ENCODE measurements at regions of chr9 and their contacts with region 1.

Region 1: GRCh38 chr9:77960356-77961153 is 71.1 kb downstream of the GNAQ start:
- DNase-seq: peak; percentile 37 to 44
- H3K4me3 ChIP-seq: no peak overlapping the region
- H3K4me1 ChIP-seq: peaks cover 12% of the 10 kb centered on the region
- H3K27me3 ChIP-seq: no peaks in the 10 kb centered on the region

Region 2: DNA sequence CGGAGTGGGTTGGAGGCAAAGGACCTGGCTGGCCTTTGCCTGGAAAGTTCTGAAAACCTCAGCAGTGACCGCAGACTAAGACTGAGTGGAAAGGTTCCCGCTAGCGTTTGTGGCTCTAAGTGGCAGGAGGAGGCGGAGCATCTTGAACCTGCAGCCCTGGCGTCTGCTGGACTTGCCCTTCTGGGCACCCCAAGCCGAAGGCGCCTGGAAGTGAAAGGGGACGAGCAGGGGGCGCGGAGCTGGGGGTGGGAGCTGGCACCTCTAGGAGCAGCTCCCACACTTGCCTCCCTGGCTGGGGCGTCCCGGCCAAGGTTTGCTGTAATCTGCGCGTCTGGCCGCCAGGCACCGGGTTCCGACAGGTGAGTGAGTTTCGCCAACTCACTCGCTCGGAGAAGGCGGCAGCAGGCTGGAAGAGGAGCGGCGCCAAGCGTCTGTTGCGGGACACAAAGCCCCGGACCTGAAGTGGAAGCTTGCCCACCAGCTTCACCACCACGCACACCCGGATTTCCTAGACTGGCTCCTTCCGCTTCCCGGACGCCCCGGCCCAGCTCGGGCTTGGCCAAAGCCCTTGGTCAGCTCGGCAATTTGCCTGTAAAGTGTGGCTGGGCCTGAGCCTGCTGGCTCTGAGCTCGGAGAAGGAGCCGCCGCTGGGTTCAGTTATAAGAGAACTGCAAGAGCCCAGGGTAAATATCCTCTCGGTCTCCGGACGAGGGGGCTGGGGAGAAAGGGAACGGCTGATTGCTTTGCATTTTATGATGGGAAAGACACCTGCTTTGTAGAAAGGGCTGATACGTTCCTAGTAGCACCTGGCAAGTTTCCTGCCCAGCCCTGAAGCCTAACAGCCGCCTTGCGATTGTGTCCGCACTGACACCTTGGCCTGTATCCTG is 312.1 kb before region 1 on chr9 and contains the start of gene GNA14:
- in situ Hi-C with region 1: no loop called
- DNase-seq: no peak
- H3K4me3 ChIP-seq: no peak within 1 kb of the TSS
- H3K4me1 ChIP-seq: no peaks in the 10 kb centered on the region
- H3K27me3 ChIP-seq: no peaks in the 10 kb centered on the region

Region 3: GRCh38 chr9:77899679-77900354 is 60.7 kb before region 1 on chr9:
- in situ Hi-C with region 1: loop called (anchors 10 kb)
- DNase-seq: no peak
- H3K4me3 ChIP-seq: no peak overlapping the region
- H3K4me1 ChIP-seq: peaks cover 18% of the 10 kb centered on the region
- H3K27me3 ChIP-seq: no peaks in the 10 kb centered on the region

Region 4: DNA sequence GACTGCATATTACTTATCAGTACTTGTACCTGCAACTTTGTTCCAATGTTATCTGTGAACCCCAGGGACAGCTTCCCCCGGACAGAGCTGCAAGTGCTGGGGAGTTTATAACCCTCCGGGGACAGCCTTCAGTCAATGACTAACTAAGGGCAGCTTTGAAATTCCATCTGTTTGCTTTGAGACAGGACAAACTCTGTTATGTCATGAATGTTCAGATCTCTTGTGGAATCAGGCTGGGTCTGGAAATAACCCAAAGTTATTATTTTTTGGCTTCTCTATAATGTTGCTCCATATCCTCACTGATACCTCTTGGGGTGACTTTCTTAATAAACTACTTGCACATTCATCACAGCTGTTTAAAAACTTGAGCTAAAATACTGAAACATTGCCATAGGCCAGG is 993.7 kb after region 1 on chr9:
- in situ Hi-C with region 1: no loop called
- DNase-seq: no peak
- H3K4me3 ChIP-seq: no peak overlapping the region
- H3K4me1 ChIP-seq: no peaks in the 10 kb centered on the region
- H3K27me3 ChIP-seq: no peaks in the 10 kb centered on the region